OCI-LY7 (cell line): ENCODE measurements at regions of chr12 and their contacts with region 1.

Region 1: GRCh38 chr12:24778486-24779304 is 170.2 kb downstream of the BCAT1 start:
- DNase-seq: peak; percentile 52
- H3K4me3 ChIP-seq: no peak overlapping the region
- H3K27ac ChIP-seq: no peak overlapping the region
- H3K4me1 ChIP-seq: no peaks in the 10 kb centered on the region
- CTCF ChIP-seq: peak; percentile 72

Region 2: DNA sequence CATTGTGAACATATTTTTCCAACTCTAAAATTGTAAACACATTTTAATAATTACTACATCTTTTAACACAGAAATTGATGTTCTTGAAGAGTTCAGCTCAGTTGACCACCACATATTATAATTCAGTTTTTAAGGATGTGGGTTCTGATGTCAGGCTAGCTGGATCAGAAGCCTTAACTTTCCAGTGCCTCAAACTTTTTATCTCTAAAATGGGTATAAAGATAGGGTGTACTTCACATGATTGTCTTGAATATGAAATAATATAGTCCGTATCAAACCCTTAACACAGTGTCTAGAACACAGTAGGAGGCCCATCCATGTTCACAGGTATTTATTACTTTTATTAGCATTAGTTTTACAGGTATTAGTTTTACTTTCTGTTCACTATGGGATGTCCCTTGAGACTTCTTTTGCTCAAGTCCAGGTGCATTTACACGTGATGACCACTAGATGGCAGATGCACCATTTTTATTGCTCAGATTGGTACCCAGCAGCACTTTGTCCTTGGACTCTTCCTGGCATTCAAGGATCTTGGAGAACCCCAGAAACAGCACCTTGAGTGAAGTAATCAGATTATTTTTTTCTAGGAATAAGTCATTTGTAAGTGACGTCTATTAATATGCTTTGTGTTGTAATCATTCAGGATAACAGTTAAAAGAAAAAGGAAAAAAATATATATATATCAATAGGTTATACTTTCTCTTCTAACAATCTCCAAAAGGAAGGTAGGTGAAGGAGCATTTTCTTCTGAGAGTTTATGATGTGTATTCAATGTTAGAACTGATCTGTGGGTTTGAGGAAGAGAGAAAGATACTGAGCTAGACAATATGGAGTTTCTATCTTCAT is 1573.5 kb before region 1 on chr12:
- CTCF ChIA-PET with region 1: no interaction called
- POLR2A ChIA-PET with region 1: no interaction called
- intact Hi-C with region 1: loop called (anchors 5 kb)
- DNase-seq: peak; percentile 67
- H3K4me3 ChIP-seq: no peak overlapping the region
- H3K27ac ChIP-seq: no peak overlapping the region
- H3K4me1 ChIP-seq: no peaks in the 10 kb centered on the region
- CTCF ChIP-seq: peak; percentile 97

Region 3: GRCh38 chr12:24574538-24574937 is 204.2 kb before region 1 on chr12:
- CTCF ChIA-PET with region 1: no interaction called
- POLR2A ChIA-PET with region 1: no interaction called
- intact Hi-C with region 1: no loop called
- DNase-seq: no peak
- H3K4me3 ChIP-seq: no peak overlapping the region
- H3K27ac ChIP-seq: no peak overlapping the region
- H3K4me1 ChIP-seq: no peaks in the 10 kb centered on the region
- CTCF ChIP-seq: no peak

Region 4: GRCh38 chr12:24823808-24824515 is 45.3 kb after region 1 on chr12:
- CTCF ChIA-PET with region 1: no interaction called
- POLR2A ChIA-PET with region 1: no interaction called
- intact Hi-C with region 1: no loop called
- DNase-seq: no peak
- H3K4me3 ChIP-seq: no peak overlapping the region
- H3K27ac ChIP-seq: no peak overlapping the region
- H3K4me1 ChIP-seq: no peaks in the 10 kb centered on the region
- CTCF ChIP-seq: no peak

Region 5: GRCh38 chr12:25625146-25625545 is 846.5 kb after region 1 on chr12:
- CTCF ChIA-PET with region 1: no interaction called
- POLR2A ChIA-PET with region 1: no interaction called
- intact Hi-C with region 1: no loop called
- DNase-seq: no peak
- H3K4me3 ChIP-seq: no peak overlapping the region
- H3K27ac ChIP-seq: no peak overlapping the region
- H3K4me1 ChIP-seq: no peaks in the 10 kb centered on the region
- CTCF ChIP-seq: no peak

Region 6: DNA sequence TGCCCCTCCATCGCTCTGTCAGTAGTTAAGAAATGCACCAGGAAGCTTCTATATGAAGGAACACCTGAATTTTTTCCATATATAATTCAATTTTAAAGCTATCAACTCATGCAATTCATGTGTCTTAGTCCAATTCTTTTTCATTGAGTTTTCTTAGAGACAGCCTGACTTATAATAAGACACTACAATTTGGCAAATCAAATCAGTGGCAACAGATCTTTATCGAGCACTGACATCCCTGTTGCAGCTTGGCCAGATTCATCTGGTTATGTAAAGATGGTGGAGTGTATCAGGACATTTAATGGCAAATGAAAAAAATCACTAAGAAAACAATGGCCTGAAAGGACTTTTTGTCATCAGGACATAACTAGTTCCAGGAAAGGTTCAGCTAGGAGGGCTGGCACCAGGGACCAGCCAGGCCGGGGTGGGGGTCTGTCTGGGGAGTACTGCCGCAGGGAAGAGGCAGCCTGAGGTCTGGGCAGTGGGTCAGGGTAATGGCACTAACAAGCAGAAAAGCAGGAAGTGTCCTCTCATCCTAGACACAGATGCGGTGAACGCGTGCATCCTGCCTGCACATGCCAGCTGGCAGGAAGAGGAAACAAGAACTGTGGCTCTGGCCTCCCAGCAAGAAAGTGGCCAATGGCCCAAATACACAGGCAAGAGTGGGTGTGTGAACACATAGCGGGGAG is 874.9 kb after region 1 on chr12:
- CTCF ChIA-PET with region 1: no interaction called
- POLR2A ChIA-PET with region 1: no interaction called
- intact Hi-C with region 1: no loop called
- DNase-seq: peak; percentile 3
- H3K4me3 ChIP-seq: no peak overlapping the region
- H3K27ac ChIP-seq: no peak overlapping the region
- H3K4me1 ChIP-seq: no peaks in the 10 kb centered on the region
- CTCF ChIP-seq: no peak